Caco-2 (cell line): ENCODE measurements at regions of chr4 and their contacts with region 1.

Region 1: GRCh38 chr4:167021545-167022155 is 212.6 kb downstream of the SPOCK3 start:
- DNase-seq: peak; percentile 54 to 66
- H3K4me3 ChIP-seq: no peak overlapping the region
- H3K4me3 Mint-ChIP-seq: no peak overlapping the region
- H3K27ac Mint-ChIP-seq: no peak overlapping the region
- H3K4me1 ChIP-seq: peaks cover 26% of the 10 kb centered on the region
- H3K4me1 Mint-ChIP-seq: no peaks in the 10 kb centered on the region
- H3K27me3 ChIP-seq: no peaks in the 10 kb centered on the region
- H3K27me3 Mint-ChIP-seq: peaks cover 2% of the 10 kb centered on the region
- CTCF ChIP-seq: peak; percentile 73 to 79

Region 2: DNA sequence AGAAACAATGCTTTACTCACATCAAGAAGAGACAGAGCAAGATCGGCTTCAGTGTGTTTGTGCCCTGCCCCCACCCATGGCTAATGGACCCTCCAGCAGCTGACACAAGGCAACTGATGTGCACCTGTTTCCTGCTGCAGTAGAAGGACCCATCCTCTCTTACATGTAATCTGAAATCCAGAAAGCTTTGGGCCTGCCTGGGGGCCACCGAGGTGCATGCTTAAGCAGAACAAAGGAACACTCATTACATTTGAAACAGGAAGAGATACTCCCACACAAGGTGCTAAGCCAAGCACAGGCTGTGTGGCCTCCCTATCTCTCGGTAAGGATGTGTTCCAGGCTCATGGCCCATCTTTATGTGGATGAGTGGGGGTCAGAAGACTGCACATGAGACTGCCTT is 125.4 kb before region 1 on chr4:
- CTCF ChIA-PET with region 1: no interaction called
- POLR2A ChIA-PET with region 1: no interaction called
- intact Hi-C with region 1: no loop called
- DNase-seq: no peak
- H3K4me3 ChIP-seq: no peak overlapping the region
- H3K4me3 Mint-ChIP-seq: no peak overlapping the region
- H3K27ac Mint-ChIP-seq: no peak overlapping the region
- H3K4me1 ChIP-seq: no peaks in the 10 kb centered on the region
- H3K4me1 Mint-ChIP-seq: no peaks in the 10 kb centered on the region
- H3K27me3 ChIP-seq: no peaks in the 10 kb centered on the region
- H3K27me3 Mint-ChIP-seq: no peaks in the 10 kb centered on the region
- CTCF ChIP-seq: no peak

Region 3: DNA sequence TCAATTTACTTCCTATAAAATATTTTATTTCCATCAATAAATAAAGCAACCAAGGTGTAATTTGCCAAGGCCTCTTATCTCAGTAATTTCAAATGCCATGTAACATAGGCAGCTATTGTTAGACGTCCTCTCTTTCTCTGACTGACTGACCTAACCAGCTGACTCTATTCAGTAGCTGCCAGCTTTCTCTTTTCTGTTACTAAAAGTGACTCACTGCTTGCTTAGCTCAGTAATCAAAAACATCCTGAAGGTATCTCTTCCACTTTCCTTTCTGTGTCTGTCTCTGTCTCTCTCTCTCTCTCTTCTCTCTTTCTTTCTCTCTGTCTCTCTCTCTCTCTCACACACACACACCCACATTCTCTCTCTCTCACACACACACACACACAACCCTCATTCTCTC is 78.5 kb after region 1 on chr4:
- CTCF ChIA-PET with region 1: no interaction called
- POLR2A ChIA-PET with region 1: interaction called, 3 read pairs
- intact Hi-C with region 1: loop called (anchors 1 kb)
- DNase-seq: no peak
- H3K4me3 ChIP-seq: no peak overlapping the region
- H3K4me3 Mint-ChIP-seq: peak overlapping the region; percentile 28
- H3K27ac Mint-ChIP-seq: no peak overlapping the region
- H3K4me1 ChIP-seq: peaks cover 19% of the 10 kb centered on the region
- H3K4me1 Mint-ChIP-seq: peaks cover 27% of the 10 kb centered on the region
- H3K27me3 ChIP-seq: no peaks in the 10 kb centered on the region
- H3K27me3 Mint-ChIP-seq: no peaks in the 10 kb centered on the region
- CTCF ChIP-seq: no peak

Region 4: GRCh38 chr4:167234316-167234881 is 212.7 kb after region 1 on chr4 and contains the start of gene SPOCK3:
- CTCF ChIA-PET with region 1: no interaction called
- POLR2A ChIA-PET with region 1: no interaction called
- intact Hi-C with region 1: loop called (anchors 1 kb)
- DNase-seq: peak in 1 of 2 experiments; percentile 32
- H3K4me3 ChIP-seq: peak within 1 kb of the TSS; percentile 38
- H3K4me3 Mint-ChIP-seq: peak within 1 kb of the TSS; percentile 73
- H3K27ac Mint-ChIP-seq: no peak within 1 kb of the TSS
- H3K4me1 ChIP-seq: no peaks in the 10 kb centered on the region
- H3K4me1 Mint-ChIP-seq: peaks cover 6% of the 10 kb centered on the region
- H3K27me3 ChIP-seq: no peaks in the 10 kb centered on the region; the same call in 1 of the 2 replicates
- H3K27me3 Mint-ChIP-seq: peaks cover 14% of the 10 kb centered on the region
- CTCF ChIP-seq: no peak
- total RNA-seq, gene SPOCK3: 1.3 and 3.0 TPM in 2 replicates

Region 5: GRCh38 chr4:167290678-167291077 is 269.0 kb after region 1 on chr4:
- CTCF ChIA-PET with region 1: no interaction called
- POLR2A ChIA-PET with region 1: no interaction called
- intact Hi-C with region 1: loop called (anchors 1 kb)
- DNase-seq: no peak
- H3K4me3 ChIP-seq: no peak overlapping the region
- H3K4me3 Mint-ChIP-seq: no peak overlapping the region
- H3K27ac Mint-ChIP-seq: no peak overlapping the region
- H3K4me1 ChIP-seq: no peaks in the 10 kb centered on the region
- H3K4me1 Mint-ChIP-seq: peaks cover 6% of the 10 kb centered on the region
- H3K27me3 ChIP-seq: no peaks in the 10 kb centered on the region
- H3K27me3 Mint-ChIP-seq: no peaks in the 10 kb centered on the region
- CTCF ChIP-seq: peak; percentile 21

Region 6: DNA sequence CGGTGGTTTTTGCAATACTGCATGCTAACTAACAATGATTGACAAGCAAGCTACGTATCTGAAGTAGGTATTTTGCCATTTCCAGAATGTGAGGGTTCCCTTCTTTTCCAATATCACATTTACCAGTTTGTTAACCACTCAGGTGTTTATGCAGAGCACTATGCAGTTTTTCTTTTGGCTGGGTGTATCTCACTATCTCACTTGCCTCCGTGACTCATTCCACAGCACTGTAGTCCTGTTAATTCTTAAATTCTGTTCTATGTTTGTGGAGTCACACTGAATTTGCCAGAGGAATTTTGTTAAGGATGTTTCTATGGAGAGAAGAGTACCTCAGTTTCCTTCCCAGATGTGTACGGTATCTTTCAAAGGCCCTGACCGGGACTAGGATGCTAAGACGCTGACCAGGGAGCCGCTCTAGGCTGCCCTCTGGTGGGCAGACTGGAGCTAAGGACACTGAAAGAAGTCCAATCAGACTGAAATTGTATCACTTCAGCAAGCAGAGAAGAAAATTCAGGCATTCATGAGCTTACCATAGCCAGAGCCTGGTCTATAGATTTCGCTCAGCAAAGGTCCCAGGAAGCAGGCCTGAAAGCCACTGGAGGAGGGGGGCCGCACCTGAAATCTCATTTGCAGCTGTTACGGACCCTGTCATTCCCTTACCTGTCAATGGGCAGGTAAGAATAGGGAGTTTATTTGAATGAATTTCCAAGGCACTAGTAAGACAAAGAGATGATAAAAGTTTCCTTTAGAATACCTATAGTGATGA is 601.0 kb after region 1 on chr4:
- CTCF ChIA-PET with region 1: no interaction called
- POLR2A ChIA-PET with region 1: no interaction called
- intact Hi-C with region 1: loop called (anchors 1 kb)
- DNase-seq: peak; percentile 47 to 63
- H3K4me3 ChIP-seq: no peak overlapping the region
- H3K4me3 Mint-ChIP-seq: no peak overlapping the region
- H3K27ac Mint-ChIP-seq: no peak overlapping the region
- H3K4me1 ChIP-seq: no peaks in the 10 kb centered on the region
- H3K4me1 Mint-ChIP-seq: peaks cover 6% of the 10 kb centered on the region
- H3K27me3 ChIP-seq: no peaks in the 10 kb centered on the region
- H3K27me3 Mint-ChIP-seq: peaks cover 2% of the 10 kb centered on the region
- CTCF ChIP-seq: peak; percentile 63 to 82